Calu3 (cell line): ENCODE measurements at regions of chr17 and their contacts with region 1.

Region 1: GRCh38 chr17:41665566-41666236 is 23.0 kb upstream of the EIF1 start:
- DNase-seq: peak; percentile 99
- H3K4me3 Mint-ChIP-seq: peak overlapping the region; percentile 77
- H3K27ac Mint-ChIP-seq: peak overlapping the region; percentile 95
- H3K4me1 Mint-ChIP-seq: peaks cover 65% of the 10 kb centered on the region
- H3K27me3 Mint-ChIP-seq: no peaks in the 10 kb centered on the region
- CTCF ChIP-seq: peak; percentile 94

Region 2: DNA sequence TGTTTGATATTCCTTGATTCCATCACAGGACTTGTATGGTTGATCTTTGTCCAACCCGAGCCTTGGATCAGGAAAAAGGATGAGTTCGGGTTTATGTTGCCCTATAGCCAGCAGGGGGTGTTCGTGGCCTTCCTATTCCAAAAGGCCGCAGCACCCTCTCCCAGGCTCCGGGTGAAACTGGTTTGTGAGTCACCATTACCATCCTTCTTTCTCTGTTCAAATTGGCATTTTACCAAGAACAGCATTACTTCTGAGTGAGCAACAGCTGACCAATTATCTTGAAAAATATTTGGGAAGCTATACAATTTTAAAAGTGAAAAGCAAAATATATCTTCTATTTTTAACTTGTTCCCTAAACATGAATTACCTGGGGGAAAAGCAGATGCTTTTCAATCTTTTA is 756.4 kb before region 1 on chr17:
- CTCF ChIA-PET with region 1: interaction called, 4 read pairs
- intact Hi-C with region 1: loop called (anchors 5 kb)
- DNase-seq: peak; percentile 99
- H3K4me3 Mint-ChIP-seq: no peak overlapping the region
- H3K27ac Mint-ChIP-seq: peak overlapping the region; percentile 86
- H3K4me1 Mint-ChIP-seq: peaks cover 94% of the 10 kb centered on the region
- H3K27me3 Mint-ChIP-seq: no peaks in the 10 kb centered on the region
- CTCF ChIP-seq: peak; percentile 98

Region 3: GRCh38 chr17:41360296-41360995 is 305.3 kb before region 1 on chr17:
- CTCF ChIA-PET with region 1: no interaction called
- intact Hi-C with region 1: no loop called
- DNase-seq: peak; percentile 46
- H3K4me3 Mint-ChIP-seq: no peak overlapping the region
- H3K27ac Mint-ChIP-seq: peak overlapping the region; percentile 61
- H3K4me1 Mint-ChIP-seq: peaks cover 41% of the 10 kb centered on the region
- H3K27me3 Mint-ChIP-seq: no peaks in the 10 kb centered on the region
- CTCF ChIP-seq: no peak

Region 4: GRCh38 chr17:41417576-41418015 is 248.1 kb before region 1 on chr17:
- CTCF ChIA-PET with region 1: interaction called, 6 read pairs
- intact Hi-C with region 1: loop called (anchors 10 kb)
- DNase-seq: peak; percentile 72
- H3K4me3 Mint-ChIP-seq: peak overlapping the region; percentile 29
- H3K27ac Mint-ChIP-seq: peak overlapping the region; percentile 84
- H3K4me1 Mint-ChIP-seq: peaks cover 72% of the 10 kb centered on the region
- H3K27me3 Mint-ChIP-seq: no peaks in the 10 kb centered on the region
- CTCF ChIP-seq: peak; percentile 91

Region 5: GRCh38 chr17:41559548-41559947 is 106.2 kb before region 1 on chr17:
- CTCF ChIA-PET with region 1: interaction called, 13 read pairs
- intact Hi-C with region 1: no loop called
- DNase-seq: no peak
- H3K4me3 Mint-ChIP-seq: no peak overlapping the region
- H3K27ac Mint-ChIP-seq: no peak overlapping the region
- H3K4me1 Mint-ChIP-seq: peaks cover 11% of the 10 kb centered on the region
- H3K27me3 Mint-ChIP-seq: peaks cover 14% of the 10 kb centered on the region
- CTCF ChIP-seq: no peak

Region 6: DNA sequence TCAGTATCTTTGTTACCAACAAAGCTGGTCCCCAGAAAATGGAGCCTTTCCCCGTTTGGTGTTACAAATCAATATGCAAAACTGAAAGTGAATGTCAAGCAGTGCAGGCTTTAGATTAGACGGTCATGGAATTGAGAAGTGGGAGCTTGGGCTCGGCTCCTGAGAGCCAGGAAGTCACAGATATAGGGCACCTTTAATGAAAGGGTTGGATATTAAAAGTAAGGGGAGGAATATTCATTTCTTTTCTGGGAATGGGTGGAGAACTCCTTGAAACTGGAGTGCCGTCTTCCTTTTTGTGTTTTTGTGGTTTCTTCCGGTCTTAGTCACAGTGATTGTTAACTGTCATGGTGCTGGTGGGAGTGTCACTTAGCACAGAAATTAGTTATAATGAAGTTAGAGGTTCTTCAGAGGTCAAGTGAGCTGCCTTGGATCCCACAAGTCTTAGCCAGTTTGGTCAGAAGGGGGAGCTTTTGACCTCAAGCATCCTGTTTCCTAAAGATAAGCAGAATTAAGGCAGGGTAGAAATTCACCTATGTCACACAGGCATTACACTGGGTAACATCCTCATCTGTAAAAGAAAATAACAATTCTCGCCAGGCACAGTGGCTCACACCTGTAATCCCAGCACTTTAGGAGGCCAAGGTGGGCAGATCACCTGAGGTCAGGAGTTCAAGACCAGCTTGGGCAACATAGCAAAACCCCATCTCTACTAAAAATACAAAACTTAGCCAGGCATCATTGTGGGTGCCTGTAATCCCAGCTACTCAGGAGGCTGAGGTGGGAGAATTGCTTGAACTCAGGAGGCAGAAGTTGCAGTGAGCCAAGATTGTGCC is 13.4 kb after region 1 on chr17:
- CTCF ChIA-PET with region 1: interaction called, 24 read pairs
- intact Hi-C with region 1: no loop called
- DNase-seq: peak; percentile 80
- H3K4me3 Mint-ChIP-seq: peak overlapping the region; percentile 69
- H3K27ac Mint-ChIP-seq: peak overlapping the region; percentile 96
- H3K4me1 Mint-ChIP-seq: peaks cover 62% of the 10 kb centered on the region
- H3K27me3 Mint-ChIP-seq: no peaks in the 10 kb centered on the region
- CTCF ChIP-seq: peak; percentile 14